GM12878 (cell line): ENCODE measurements at regions of chr4 and their contacts with region 1.

Region 1: DNA sequence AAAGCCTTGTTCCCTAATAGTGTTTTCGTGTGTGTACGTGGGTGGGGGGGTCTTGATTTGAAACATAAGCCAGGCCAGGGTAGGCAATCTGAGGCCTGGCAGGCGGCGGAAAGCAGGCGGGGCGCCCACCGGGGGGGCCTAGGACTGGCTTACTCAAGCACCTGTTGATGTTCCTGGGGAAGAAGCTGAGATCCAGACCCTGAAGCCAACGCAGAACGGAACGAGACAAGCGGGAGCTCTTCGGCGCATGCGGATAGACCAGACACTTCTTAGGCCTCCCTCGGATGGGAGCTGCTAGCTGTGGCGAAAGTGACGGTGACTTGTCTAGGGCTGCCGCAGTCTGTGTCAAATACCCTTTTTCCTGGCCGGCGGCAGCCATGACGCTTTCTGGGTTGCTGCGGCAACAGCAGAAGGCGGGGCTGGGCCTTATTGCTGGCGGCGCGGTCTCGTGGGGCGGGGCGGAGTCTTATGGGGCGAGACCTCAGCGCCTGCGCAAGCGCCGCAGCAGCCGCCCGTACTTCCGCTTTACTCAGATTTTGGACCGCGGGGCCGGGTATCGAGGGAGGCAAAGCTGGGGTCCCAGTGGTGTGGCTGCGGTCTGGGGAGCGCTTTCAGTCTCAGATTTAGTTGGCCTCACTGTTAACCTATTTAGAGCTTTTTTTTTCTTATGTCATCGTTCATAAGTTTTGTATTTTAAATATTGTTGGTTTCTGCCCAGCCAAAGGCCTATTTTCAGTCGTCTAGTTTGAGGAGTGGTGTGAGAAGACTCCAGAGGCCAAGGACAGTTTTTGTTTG is at the start of gene SPATA4:
- DNase-seq: peak; percentile 84
- ATAC-seq: peak; percentile 99
- H3K4me3 ChIP-seq: peak within 1 kb of the TSS; percentile 66
- H3K27ac ChIP-seq: no peak within 1 kb of the TSS
- H3K4me1 ChIP-seq: peaks cover 12% of the 10 kb centered on the region
- H3K27me3 ChIP-seq: peaks cover 0 to 1% of the 10 kb centered on the region in 2 experiments; a peak in 3 of 4 replicates
- CTCF ChIP-seq: no peak
- EP300 ChIP-seq: peak; percentile 42 to 66; a peak in 1 of 4 replicates
- POLR2A ChIP-seq: no peak
- RAD21 ChIP-seq: 0 out of 2 replicates have a peak, but pooled peaks have one; percentile 4
- polyA plus RNA-seq, gene SPATA4: not detected

Region 2: GRCh38 chr4:175308236-175308635 is 887.1 kb before region 1 on chr4:
- CTCF ChIA-PET with region 1: no interaction called
- POLR2A ChIA-PET with region 1: no interaction called
- RAD21 ChIA-PET with region 1: no interaction called
- SMC1A ChIA-PET with region 1: no interaction called
- in situ Hi-C with region 1: no loop called
- intact Hi-C with region 1: no loop called
- DNase-seq: no peak
- ATAC-seq: no peak
- H3K4me3 ChIP-seq: no peak overlapping the region
- H3K27ac ChIP-seq: no peak overlapping the region
- H3K4me1 ChIP-seq: no peaks in the 10 kb centered on the region
- H3K27me3 ChIP-seq: no peaks in the 10 kb centered on the region
- CTCF ChIP-seq: no peak
- EP300 ChIP-seq: no peak
- POLR2A ChIP-seq: no peak
- RAD21 ChIP-seq: no peak

Region 3: GRCh38 chr4:176123710-176124407 is 71.5 kb before region 1 on chr4:
- CTCF ChIA-PET with region 1: interaction called, 12 read pairs
- POLR2A ChIA-PET with region 1: no interaction called
- RAD21 ChIA-PET with region 1: no interaction called
- SMC1A ChIA-PET with region 1: interaction called, 9 read pairs
- in situ Hi-C with region 1: no loop called
- intact Hi-C with region 1: loop called (anchors 1 kb)
- DNase-seq: peak; percentile 51
- ATAC-seq: peak; percentile 99
- H3K4me3 ChIP-seq: 0 out of 2 replicates have a peak overlapping the region, but pooled peaks have one; percentile 1
- H3K27ac ChIP-seq: no peak overlapping the region
- H3K4me1 ChIP-seq: peaks cover 7% of the 10 kb centered on the region
- H3K27me3 ChIP-seq: no peaks in the 10 kb centered on the region
- CTCF ChIP-seq: peak; percentile 47 to 80 (median 67)
- EP300 ChIP-seq: peak; percentile 71 to 78; a peak in 3 of 4 replicates
- POLR2A ChIP-seq: no peak
- RAD21 ChIP-seq: peak; percentile 33

Region 4: DNA sequence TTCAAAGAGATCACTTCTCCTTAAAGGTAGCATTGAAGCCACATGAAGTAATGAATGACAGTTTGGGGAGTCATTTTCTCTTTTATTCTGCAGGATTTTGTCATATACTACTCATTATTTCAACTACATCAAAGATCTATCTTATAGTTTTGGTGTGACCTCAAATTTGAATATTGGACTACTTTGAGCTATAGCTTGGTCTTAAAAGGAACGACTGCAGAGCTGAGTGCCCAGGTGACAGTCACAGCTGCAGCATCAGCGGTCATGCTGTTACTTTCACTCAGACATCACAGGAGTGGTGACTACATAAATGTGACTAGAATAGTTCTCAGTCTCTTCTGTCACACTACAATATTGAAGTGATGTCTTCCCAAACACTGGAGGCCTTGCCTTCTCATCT is 113.7 kb after region 1 on chr4:
- CTCF ChIA-PET with region 1: no interaction called
- POLR2A ChIA-PET with region 1: no interaction called
- RAD21 ChIA-PET with region 1: no interaction called
- SMC1A ChIA-PET with region 1: interaction called, 3 read pairs
- in situ Hi-C with region 1: loop called (anchors 5 kb)
- intact Hi-C with region 1: no loop called
- DNase-seq: no peak
- ATAC-seq: peak; percentile 98
- H3K4me3 ChIP-seq: no peak overlapping the region
- H3K27ac ChIP-seq: no peak overlapping the region
- H3K4me1 ChIP-seq: peaks cover 17% of the 10 kb centered on the region
- H3K27me3 ChIP-seq: no peaks in the 10 kb centered on the region
- CTCF ChIP-seq: no peak
- EP300 ChIP-seq: peak; percentile 13 to 32; a peak in 1 of 4 replicates
- POLR2A ChIP-seq: no peak
- RAD21 ChIP-seq: no peak